ENCODE measurements at regions of chr11 and their contacts with region 1.

Region 1: DNA sequence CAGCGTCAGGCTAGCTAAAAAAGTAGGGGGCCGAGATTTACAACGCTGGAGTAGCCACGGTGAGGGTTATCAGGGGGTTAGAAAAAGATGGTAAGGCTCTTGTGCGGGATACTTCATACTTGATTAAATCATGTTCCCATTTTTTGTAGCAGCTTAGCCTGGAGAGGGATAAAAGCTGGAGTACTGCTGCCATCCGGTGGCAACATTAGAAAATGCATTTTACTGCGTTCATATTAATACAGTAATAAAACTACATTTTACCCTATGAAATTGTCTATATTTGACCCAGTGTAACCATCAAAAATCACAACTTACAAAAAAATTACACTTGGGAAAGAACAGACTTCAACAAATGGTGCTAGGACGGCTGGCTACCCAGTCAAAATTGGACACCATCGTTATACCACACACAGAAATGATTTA is 17.3 kb downstream of the RPUSD4 start:
- DNase-seq: no peak
- ATAC-seq: peak; percentile 24 to 62 (median 44)
- H3K4me3 ChIP-seq: no peak overlapping the region
- H3K27ac ChIP-seq: no peak overlapping the region
- H3K4me1 ChIP-seq: peaks cover 0 to 9% (median 0%) of the 10 kb centered on the region in 12 donors
- H3K27me3 ChIP-seq: no peaks in the 10 kb centered on the region
- CTCF ChIP-seq: peak; percentile 45 to 83 (median 70)
- POLR2A ChIP-seq: no peak

Region 2: DNA sequence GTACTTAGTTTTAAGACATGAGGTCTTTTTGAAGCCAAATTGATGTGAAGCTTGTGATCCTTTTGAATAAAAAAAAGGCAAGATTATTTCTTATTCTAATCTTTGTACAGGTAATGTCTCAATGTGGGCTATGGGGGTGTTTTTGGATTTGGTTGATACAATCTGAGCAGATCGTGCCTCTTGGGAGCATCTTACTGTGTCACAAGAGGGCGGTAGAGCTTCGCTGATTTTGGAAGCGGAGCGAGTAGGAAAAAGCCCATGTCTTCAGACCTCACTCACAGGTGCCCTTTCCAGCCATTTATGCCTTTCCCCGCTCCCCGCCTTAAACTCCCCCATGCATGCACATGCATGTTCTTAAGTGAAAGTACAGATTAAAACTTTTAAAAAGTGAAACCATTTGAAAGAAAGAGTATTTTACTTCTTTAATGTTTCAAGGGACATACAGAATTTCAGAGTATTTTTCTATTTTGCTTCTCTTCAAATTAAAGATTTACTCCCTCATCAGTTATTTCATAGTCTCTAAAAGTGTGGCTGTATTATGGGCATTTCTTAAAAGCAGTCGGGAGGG is 271.0 kb before region 1 on chr11:
- intact Hi-C with region 1: loop called (anchors 1 to 5 kb)
- DNase-seq: peak in 4 of 5 donors; percentile 52 to 61 (median 57)
- ATAC-seq: peak; percentile 69 to 89 (median 76)
- H3K4me3 ChIP-seq: no peak overlapping the region
- H3K27ac ChIP-seq: no peak overlapping the region
- H3K4me1 ChIP-seq: no peaks in the 10 kb centered on the region
- H3K27me3 ChIP-seq: peaks cover 0 to 13% (median 0%) of the 10 kb centered on the region in 9 donors
- CTCF ChIP-seq: peak; percentile 65 to 87 (median 79)
- POLR2A ChIP-seq: no peak

Region 3: GRCh38 chr11:125941619-125942611 is 252.2 kb before region 1 on chr11:
- intact Hi-C with region 1: loop called in 5 of 10 experiments (anchors 5 kb)
- DNase-seq: peak in 4 of 5 donors; percentile 55 to 79 (median 61)
- ATAC-seq: peak; percentile 61 to 80 (median 76)
- H3K4me3 ChIP-seq: no peak overlapping the region
- H3K27ac ChIP-seq: peak overlapping the region in 10 of 12 donors; percentile 6 to 68 (median 55)
- H3K4me1 ChIP-seq: peaks cover 0 to 32% (median 11%) of the 10 kb centered on the region in 12 donors
- H3K27me3 ChIP-seq: peaks cover 0 to 7% (median 0%) of the 10 kb centered on the region in 9 donors
- CTCF ChIP-seq: peak; percentile 51 to 76 (median 66)
- POLR2A ChIP-seq: no peak